ENCODE measurements at regions of chr4 and their contacts with region 1.

Region 1: GRCh38 chr4:6720202-6720699 is 4.3 kb downstream of the BLOC1S4 start:
- DNase-seq: peak; percentile 79 to 98 (median 92)

Region 2: DNA sequence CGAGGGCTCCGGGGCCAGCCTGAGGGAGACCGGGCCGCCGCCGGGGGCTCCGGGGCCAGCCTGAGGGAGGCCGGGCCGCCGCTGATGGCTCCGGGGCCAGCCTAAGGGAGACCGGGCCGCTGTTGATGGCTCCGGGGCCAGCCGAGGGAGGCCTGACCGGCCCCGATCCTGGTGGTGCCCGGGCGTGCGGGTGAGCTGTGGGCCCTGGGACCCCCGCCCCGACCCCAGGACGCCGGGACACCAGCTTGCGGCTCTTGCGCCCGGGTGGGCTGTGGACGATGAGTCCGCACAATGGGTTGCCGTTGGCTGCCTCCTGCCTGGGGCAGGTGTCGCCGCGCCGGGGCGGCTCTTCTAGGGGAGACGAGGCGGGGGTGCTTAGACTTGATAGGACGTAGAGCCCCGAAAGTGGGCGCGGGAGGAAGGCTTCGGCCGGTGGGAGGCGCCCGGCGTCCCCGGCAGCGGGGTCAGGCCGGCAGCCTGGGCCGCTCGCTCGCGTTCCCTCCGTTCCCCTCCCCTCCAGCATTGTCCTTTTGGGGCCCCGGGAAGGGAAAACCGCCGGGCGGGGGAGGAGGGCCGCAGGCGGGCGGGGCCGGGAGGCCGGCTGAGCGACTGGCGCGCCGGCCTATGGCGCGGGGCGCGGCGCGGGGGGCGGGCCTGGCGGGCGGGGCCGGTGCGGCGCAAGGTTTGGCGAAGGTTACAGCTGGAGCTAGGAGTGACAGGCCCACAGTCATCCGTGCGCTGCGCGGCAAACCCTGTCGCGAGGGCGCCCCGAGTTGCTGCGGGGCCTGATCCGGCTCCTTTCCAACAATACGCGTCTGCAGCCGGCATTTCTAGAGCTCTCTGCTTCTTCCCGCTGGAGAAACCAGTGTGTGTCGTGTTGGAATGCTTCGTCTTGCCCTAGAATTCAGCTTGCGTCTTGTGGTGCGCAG is 63.1 kb after region 1 on chr4:
- intact Hi-C with region 1: loop called (anchors 2 kb)
- DNase-seq: peak; percentile 85 to 99 (median 93)

Region 3: DNA sequence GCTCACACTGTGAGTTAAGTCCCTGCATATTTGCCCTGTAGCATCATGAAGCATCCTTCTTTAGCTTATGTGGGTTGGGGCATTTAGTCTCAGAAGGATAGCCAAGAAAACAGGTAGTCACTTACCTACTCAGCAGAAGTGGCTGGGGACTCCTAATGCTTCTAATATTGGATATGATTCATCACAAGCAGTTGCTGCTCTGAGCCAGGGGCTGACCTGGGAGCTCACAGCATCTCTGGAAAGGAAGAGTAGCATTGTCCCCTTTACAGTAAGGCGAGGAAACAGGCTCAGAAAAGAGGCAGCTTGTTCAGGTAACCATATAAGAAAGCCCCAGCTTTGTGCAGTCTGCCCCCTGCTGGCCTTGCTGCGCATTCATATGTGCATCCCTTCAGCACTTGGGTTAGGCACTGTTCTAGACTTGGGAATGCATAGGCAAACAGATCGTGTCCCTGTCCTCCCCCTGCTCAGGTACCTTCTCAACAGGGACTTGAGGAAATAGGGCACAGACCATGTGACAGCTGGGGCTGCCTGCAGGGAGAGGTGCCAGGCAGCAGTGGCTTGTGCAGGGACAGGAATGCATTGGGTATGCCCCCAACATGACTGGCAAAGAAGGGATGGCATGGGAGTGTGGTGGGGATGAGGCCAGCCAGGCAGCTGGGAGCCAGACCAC is 153.7 kb after region 1 on chr4:
- intact Hi-C with region 1: loop called (anchors 1 kb)
- DNase-seq: peak in 9 of 10 donors; percentile 63 to 96 (median 79)

Region 4: DNA sequence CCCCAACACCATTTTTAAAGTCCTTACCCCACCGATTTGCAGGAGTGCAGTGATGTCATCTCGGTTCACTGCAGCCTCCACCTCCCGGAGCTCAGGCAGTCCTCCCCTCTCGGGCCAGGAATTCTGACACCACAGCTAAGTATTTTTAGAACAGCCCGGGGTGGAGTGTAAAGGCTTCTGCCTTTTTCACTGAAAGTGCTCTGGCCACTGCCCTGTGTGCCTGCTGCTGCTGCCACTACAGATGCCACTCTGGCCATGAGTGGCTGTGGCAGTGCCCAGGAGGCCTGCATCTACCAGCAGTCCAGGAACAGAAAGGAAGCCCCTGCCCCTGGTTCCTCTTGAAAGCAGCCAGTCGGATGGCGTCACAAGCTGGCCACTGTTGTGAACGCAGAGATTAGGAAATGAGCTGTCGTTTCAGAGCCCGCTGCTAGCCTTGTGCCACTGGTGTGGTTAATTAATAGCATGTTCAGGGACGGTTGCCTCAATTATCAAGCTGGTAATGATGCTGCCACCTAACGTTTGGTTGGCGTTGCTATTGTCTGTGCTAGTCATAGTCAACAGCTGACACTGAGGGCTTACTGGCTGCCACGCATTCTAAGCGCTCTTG is 165.8 kb after region 1 on chr4:
- intact Hi-C with region 1: loop called (anchors 2 kb)
- DNase-seq: peak in 7 of 10 donors; percentile 61 to 94 (median 68)

Region 5: GRCh38 chr4:6986781-6987587 is 266.7 kb after region 1 on chr4:
- intact Hi-C with region 1: loop called (anchors 10 kb)
- DNase-seq: peak; percentile 92 to 100 (median 96)

Region 6: DNA sequence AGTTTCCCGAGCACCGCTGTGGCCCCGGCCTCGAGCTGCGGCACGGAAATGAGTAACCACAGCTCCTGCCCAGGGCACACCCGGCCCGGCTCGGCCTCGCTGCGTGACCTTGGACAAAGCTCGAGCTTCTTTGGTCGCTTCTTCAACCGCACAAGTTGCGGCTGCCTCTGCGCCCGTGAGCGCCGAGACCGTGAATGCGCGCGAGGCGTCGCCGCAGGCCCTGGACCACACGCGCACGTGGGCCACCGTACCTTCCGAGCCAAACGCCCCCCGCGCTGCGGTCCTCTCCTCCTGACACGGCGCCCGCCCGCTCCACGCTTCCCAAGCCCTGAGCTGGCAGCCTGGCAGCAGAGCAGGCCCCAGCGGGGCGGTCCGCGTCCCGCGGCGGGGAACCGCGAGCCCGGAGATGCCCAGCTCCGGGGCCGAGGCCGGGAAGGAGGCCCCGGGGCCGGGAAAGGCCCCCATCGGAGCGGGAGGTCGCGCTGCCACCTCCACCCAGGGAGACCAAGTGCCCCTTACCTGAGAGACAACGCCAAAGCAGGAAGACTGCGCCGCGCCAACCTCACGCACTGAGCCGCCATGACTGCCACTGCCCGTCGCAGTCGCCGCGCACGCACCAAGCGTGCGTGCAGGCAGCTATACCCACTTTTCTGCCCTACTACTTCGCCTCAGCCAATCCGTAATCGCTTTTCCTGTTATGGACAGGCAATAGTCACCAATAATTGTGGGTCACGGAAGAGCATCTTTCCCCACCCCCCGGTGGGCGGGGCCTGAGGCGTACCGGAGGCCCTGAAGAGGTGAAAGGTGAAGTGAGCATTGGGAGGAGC is 347.4 kb after region 1 on chr4 and contains the start of gene GRPEL1:
- intact Hi-C with region 1: loop called (anchors 1 kb)
- DNase-seq: peak; percentile 98 to 100 (median 99)

Region 7: DNA sequence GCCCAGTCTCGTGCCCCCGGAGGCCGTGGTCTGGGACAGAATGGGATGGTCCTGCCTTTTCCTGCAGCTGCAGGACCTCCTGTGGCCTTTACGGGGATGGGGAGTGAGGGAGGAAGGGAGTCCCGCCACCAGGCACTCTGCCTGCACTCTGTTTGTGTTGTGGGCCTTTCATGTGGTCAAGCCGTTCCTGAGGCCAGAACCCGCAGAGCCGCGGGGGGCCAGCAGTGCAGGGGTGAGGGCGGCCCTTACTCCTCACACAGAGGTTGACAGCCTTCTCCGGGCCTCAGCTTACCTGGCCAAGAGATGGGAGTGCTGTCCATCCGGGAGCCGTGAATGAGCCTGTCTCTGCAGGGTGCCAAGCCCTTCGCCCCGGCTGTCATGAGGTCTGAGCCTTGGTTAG is 988.7 kb after region 1 on chr4:
- intact Hi-C with region 1: no loop called
- DNase-seq: peak in 3 of 10 donors; percentile 14 to 78 (median 60)